GM18951 (cell line): ENCODE measurements at regions of chr22 and their contacts with region 1.

Region 1: DNA sequence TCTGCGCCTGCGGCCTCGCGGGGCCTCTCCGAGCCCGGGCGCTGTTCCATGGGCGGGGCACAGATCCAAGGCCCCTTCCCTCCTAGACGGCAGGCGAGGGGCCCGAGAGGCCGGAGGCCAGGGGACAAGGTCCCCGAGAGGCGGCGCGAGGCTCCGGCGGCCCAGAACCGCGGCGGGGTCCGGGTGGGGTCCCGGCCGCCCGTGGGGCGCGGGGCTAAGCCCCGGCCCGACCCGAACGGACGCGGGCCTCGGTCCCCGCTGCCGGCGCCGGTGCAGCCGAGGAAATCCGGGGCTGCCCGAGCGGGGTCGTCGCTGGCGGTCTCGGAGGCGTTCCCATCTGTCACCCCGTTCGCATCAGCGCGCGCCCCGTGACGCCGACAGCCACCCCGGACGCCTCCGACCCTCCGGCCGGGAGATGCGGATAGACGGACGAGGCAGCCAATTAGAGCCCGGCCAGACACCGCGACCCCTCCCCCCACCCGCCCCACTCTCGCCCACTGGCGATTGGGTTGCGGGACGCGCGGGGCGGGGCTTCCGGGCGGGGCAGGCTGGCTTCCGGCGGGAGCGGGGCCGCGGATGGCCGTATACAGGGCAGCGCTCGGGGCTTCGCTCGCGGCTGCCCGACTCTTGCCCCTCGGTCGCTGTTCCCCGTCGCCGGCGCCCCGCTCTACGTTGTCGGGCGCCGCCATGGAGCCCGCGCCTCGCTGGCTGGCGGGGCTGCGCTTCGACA is at the start of gene SELENOO:
- POLR2A ChIP-seq: peak; percentile 83

Region 2: DNA sequence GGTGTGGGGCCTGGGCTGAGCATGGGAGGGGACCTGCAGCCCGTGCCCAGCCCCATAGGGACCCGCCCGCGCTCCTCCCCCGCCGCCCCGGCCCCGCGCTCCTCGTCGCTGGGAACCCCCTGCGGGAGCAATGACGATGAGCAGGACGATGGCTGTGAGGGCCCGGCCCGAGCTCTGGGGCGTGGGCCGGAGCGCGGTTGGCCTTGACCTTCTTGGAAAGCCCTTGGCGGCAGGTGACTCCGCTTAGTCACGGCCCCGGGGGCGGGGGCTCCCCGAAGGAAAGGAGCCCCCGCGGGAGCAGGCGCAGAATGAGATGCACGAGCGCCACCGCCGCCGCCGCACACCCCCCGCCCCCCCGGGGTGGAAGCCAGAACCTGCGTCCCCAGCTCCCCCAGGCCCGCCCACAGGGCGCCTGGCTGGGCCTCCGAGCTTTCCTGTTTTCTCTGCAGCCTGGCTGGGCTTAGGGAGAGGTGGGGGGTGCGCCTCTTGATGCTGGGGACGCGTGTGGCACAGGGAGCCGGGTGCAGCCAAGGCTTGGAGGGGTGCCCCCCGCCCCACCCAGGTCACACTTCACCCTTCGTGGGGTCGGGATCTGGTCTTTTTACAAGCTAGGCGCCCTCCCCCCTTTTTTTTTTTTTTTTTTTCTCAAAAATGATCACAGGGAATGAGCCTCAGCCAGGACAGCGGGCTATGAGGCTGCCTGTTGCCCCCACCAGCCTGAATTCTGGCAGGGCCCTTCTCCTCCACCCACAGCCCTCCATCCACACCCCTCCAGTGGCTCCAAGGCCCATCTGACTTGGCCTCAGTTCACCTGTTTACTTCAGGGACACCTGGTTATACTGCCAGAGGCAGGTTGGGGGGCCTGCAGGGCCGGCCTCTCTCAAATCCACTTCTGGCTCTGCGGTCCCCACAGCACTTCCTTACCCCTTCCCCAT is 264.3 kb before region 1 on chr22:
- in situ Hi-C with region 1: loop called (anchors 25 kb)
- POLR2A ChIP-seq: peak; percentile 55

Region 3: DNA sequence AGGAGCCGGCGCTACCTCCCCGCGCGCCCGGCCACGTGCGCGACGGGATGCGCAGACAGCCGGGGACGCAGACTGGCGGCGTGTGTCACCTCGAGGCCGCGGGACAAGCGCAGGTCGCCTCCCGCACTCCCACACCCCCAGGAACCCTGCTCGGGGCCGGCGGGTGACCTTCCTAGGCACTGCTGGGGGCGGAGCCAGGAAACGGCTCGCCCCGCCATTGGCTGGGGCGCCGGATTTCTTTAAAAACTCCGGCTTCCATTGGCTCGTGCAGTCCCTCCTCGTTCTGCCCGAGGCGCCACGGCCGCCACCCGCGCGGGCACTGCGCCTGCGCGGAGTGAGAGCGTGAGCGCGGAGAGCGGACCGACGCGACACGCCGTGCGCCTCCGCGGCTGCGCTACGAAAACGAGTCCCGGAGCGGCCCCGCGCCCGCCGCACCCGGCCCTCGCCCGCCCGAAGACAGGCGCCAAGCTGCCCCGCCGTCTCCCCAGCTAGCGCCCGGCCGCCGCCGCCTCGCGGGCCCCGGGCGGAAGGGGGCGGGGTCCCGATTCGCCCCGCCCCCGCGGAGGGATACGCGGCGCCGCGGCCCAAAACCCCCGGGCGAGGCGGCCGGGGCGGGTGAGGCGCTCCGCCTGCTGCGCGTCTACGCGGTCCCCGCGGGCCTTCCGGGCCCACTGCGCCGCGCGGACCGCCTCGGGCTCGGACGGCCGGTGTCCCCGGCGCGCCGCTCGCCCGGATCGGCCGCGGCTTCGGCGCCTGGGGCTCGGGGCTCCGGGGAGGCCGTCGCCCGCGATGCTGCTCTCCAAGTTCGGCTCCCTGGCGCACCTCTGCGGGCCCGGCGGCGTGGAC is 240.2 kb before region 1 on chr22 and contains the start of gene PIM3:
- in situ Hi-C with region 1: no loop called
- POLR2A ChIP-seq: peak; percentile 96